Ascending aorta (tissue), 2 donors: ENCODE measurements at regions of chr2 and their contacts with region 1.

Region 1: GRCh38 chr2:202634556-202635427 is at the start of gene FAM117B:
- DNase-seq: peak; percentile 99
- H3K4me3 ChIP-seq: peak within 1 kb of the TSS; percentile 75 to 90
- H3K27ac ChIP-seq: peak within 1 kb of the TSS; percentile 78 to 87
- H3K4me1 ChIP-seq: peaks cover 3 to 8% of the 10 kb centered on the region in 2 donors
- H3K27me3 ChIP-seq: no peaks in the 10 kb centered on the region
- CTCF ChIP-seq: peak in 1 of 3 experiments; percentile 5
- total RNA-seq, gene FAM117B: 30.1 TPM

Region 2: GRCh38 chr2:202265467-202266277 is 369.1 kb before region 1 on chr2 and contains the start of gene NOP58:
- intact Hi-C with region 1: loop called (anchors 10 kb)
- DNase-seq: peak; percentile 74 to 97
- H3K4me3 ChIP-seq: peak within 1 kb of the TSS; percentile 96 to 97
- H3K27ac ChIP-seq: peak within 1 kb of the TSS; percentile 94 to 97
- H3K4me1 ChIP-seq: peaks cover 0 to 9% of the 10 kb centered on the region in 2 donors
- H3K27me3 ChIP-seq: no peaks in the 10 kb centered on the region
- CTCF ChIP-seq: no peak
- total RNA-seq, gene NOP58: 65.8 TPM

Region 3: DNA sequence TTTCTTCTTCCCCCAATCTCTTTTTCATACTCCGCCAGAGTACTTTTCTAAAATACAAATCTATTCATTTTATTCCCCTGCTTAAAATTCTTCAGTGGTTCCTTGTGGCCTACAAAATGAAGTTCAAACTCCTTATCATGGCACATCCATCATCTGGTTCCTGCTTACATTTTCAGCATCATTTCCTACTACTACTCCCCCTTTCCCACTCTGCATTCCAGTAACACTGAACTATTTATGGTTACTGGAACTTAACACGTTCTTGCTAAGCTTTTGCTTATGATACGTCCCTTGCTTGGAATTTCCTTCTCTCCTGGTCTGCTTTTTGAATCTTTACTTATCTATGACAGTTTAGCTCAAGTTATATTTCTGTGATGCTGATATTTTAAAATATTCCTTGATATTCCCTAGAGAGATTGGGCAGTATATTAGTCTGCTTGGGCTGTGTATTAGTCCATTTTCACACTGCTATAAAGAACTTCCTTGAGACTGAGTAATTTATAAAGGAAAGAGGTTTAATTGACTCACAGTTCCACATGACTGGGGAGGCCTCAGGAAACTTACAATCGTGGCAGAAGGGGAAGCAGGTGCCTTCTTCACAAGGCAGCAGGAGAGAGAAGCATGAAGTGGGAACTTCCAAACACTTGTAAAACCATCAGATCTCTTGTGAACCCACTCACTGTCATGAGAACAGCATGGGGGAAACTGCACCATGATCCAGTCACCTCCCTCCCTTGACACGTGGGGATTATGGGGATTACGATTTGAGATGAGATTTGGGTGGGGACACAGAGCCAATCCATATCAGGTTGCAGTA is 205.4 kb before region 1 on chr2:
- intact Hi-C with region 1: loop called (anchors 5 kb)
- DNase-seq: no peak
- H3K4me3 ChIP-seq: peak overlapping the region in 1 of 2 donors; percentile 1
- H3K27ac ChIP-seq: peak overlapping the region; percentile 92 to 94
- H3K4me1 ChIP-seq: peaks cover 3 to 47% of the 10 kb centered on the region in 2 donors
- H3K27me3 ChIP-seq: no peaks in the 10 kb centered on the region
- CTCF ChIP-seq: no peak

Region 4: GRCh38 chr2:202808754-202809153 is 174.0 kb after region 1 on chr2:
- intact Hi-C with region 1: loop called (anchors 5 kb)
- DNase-seq: no peak
- H3K4me3 ChIP-seq: no peak overlapping the region
- H3K27ac ChIP-seq: peak overlapping the region in 1 of 2 donors; percentile 70
- H3K4me1 ChIP-seq: peaks cover 6 to 17% of the 10 kb centered on the region in 2 donors
- H3K27me3 ChIP-seq: no peaks in the 10 kb centered on the region
- CTCF ChIP-seq: no peak

Region 5: DNA sequence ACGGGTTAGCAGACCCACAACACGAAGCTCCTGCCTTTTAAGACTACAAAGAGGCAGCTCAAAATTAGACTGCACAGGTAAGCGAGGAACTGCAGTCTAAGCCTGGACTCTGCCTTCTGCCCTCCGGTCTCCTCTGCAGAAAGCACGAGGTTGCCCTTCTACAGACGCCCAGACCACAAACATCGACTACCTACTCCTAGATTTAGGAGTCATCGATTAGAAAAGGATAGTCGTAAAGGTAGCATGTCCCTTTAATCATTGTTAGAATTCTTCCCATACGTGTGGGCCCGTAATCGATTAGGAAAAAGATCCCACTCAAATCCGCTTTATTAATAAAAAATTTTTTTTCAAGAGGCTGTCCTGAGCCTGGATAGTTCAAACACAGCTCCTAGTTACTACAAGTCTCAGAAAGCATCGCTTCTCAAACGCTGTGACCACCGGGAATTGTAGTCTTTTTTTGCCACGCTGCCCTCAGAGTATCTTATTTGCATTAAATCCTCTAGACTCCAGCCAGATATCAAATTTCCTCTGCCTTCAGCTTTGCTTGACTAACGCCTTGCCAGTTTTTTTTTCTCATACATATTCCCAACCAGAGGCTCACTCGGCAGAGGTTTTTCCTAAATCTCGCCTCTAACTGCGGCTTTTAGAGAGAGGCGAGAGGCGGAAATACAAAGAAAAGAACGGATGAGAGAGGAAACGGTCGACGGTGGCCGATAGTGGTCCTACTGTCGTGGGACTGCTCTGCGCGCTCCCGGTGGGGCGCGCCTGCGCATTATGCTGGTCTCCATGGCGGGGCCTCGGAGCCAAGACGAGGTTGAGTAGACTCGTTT is 276.9 kb after region 1 on chr2 and contains the starts of genes CARF and WDR12:
- intact Hi-C with region 1: loop called (anchors 5 kb)
- DNase-seq: peak; percentile 61 to 95
- H3K4me3 ChIP-seq: peak within 1 kb of the TSS; percentile 64 to 69
- H3K27ac ChIP-seq: peak within 1 kb of the TSS; percentile 82
- H3K4me1 ChIP-seq: peaks cover 0 to 11% of the 10 kb centered on the region in 2 donors
- H3K27me3 ChIP-seq: no peaks in the 10 kb centered on the region
- CTCF ChIP-seq: no peak
- total RNA-seq, gene CARF: 26.2 TPM
- total RNA-seq, gene WDR12: 2.1 TPM

Region 6: DNA sequence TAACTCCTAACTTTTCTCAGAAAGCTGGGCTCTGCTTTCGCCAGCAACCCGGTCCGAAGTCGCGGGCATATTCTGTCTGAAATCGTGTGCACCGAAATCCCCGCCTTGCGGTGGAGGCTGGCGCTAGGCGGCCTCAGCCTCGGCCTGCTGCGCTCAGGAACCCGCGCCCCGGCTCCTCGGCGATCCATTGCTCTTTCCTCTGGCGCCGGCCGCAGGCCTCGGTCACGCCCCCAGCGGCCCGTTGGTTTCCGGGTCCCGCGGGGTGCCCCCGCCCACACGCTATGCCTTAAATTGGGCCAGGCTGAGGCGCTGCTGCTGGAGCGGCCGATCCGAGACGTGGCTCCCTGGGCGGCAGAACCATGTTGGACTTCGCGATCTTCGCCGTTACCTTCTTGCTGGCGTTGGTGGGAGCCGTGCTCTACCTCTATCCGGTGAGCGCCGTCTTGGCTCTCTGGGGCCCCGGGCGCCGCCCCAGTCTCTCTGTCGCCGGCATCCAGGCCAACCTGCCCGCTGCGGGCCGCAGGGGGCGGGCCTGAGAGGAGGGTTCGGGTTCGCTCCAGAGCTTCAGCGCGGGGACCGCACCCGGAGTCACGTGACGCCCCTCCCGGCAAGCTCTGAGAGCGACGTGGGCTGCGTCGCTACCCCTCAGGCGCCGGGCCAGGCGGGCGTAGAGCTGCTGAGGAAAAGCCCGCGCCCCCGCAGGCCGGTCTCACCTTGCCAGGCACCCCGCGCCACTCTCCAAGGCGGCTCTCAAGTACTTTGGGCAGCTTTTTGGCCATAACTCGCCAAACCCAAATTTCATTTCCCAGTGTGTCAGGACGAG is 604.1 kb after region 1 on chr2 and contains the start of gene CYP20A1:
- intact Hi-C with region 1: loop called (anchors 5 kb)
- DNase-seq: peak; percentile 82 to 98
- H3K4me3 ChIP-seq: peak within 1 kb of the TSS; percentile 51 to 72
- H3K27ac ChIP-seq: peak within 1 kb of the TSS; percentile 94 to 96
- H3K4me1 ChIP-seq: peaks cover 0 to 16% of the 10 kb centered on the region in 2 donors
- H3K27me3 ChIP-seq: no peaks in the 10 kb centered on the region
- CTCF ChIP-seq: peak in 2 of 3 experiments; percentile 21 to 40
- total RNA-seq, gene CYP20A1: 13.6 TPM